Calu3 (cell line): ENCODE measurements at regions of chr2 and their contacts with region 1.

Region 1: GRCh38 chr2:203814661-203815540 is 52.7 kb upstream of the CTLA4 start:
- DNase-seq: peak; percentile 49
- H3K4me3 Mint-ChIP-seq: no peak overlapping the region
- H3K27ac Mint-ChIP-seq: peak overlapping the region; percentile 98
- H3K4me1 Mint-ChIP-seq: peaks cover 73% of the 10 kb centered on the region
- H3K27me3 Mint-ChIP-seq: no peaks in the 10 kb centered on the region
- CTCF ChIP-seq: peak; percentile 68

Region 2: DNA sequence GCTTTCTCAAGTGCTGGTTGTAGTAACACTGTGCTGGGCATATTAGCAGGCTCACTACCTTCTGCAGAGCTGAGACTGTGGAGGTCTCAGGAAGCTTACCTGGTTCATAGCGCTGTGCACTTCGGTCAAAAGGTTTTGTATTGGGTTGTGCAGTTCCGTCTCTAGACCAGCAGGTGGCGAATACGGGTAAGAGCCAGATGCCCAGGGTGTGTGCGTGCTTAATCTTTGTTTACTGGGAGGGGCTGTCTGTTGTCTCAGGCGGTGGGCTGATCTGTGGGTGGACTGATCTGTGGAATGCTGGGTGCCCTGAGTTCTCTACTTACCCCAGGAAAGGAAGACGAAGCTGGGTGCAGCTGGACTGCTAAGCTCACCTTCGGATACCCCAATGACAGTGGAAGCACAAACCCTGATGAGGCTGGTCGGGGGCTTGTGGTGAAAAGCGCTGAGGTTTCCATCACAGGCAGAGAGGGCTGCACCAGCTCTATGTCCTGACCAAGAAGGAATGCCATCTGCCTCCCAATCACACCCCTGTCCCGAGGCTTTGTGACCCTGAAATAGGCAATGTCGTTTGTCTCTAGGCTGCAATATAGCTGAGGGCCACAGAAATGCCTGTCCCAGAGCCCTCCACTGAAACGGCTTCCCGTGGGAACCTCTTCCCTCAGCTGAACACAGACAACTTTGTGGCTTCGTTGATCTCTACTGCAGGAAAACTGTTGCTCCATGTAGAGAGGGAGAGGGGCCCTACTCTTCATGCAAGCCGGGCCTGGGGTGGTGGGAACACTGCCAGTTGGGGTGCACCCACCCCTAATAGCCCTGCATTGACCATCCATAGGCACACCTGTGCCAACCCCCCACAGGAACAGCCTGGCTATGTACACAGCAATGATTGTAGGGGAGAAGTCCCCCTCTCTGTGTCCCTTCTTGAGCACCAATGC is 1226.0 kb before region 1 on chr2:
- CTCF ChIA-PET with region 1: interaction called, 3 read pairs
- intact Hi-C with region 1: loop called (anchors 10 kb)
- DNase-seq: peak; percentile 66
- H3K4me3 Mint-ChIP-seq: no peak overlapping the region
- H3K27ac Mint-ChIP-seq: no peak overlapping the region
- H3K4me1 Mint-ChIP-seq: peaks cover 10% of the 10 kb centered on the region
- H3K27me3 Mint-ChIP-seq: no peaks in the 10 kb centered on the region
- CTCF ChIP-seq: peak; percentile 98

Region 3: GRCh38 chr2:203484266-203485112 is 330.4 kb before region 1 on chr2:
- CTCF ChIA-PET with region 1: interaction called, 3 read pairs
- intact Hi-C with region 1: loop called (anchors 2 kb)
- DNase-seq: peak; percentile 35
- H3K4me3 Mint-ChIP-seq: no peak overlapping the region
- H3K27ac Mint-ChIP-seq: peak overlapping the region; percentile 46
- H3K4me1 Mint-ChIP-seq: peaks cover 19% of the 10 kb centered on the region
- H3K27me3 Mint-ChIP-seq: no peaks in the 10 kb centered on the region
- CTCF ChIP-seq: peak; percentile 41

Region 4: DNA sequence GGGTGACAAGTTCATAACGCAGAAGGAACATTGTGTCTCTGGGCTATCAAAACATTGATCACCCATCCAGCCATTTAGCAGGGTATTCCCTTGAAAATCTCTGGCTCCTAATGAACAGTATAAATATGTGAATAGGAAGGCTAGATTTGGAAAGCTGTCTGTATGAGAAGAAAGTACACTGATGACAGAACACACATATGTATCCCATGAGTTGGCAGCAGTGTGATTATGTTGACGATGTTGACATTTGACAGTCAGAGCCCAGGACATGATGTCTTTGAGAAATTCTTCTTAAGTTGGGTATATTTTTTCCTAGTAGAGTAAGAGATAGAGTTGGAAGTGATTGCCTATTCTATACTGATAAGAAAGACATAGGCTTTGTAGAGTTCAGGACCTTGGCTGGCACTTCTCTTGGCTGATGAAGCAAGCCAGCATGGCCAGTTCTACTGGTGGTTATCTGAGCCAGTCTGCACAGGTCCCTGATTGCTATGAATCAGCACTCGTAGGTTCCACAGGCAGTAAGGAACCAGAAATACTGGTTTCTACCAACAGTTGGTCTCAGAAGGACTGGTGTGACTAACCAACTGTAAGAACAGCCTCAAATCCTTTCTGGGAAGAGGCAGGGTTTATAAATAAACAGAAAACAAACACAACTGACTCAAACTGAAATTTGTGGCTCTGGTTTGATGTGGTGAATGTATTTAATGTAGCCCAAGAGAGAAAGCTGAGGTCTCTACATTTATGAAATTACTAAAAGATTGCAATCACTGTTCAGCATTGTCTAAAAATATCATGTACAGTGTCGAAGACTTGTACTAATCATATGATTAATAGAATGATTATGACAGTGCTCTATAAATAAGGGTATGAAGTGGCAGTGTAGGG is 235.9 kb before region 1 on chr2:
- CTCF ChIA-PET with region 1: interaction called, 3 read pairs
- intact Hi-C with region 1: loop called (anchors 2 kb)
- DNase-seq: peak; percentile 79
- H3K4me3 Mint-ChIP-seq: peak overlapping the region; percentile 57
- H3K27ac Mint-ChIP-seq: peak overlapping the region; percentile 97
- H3K4me1 Mint-ChIP-seq: peaks cover 55% of the 10 kb centered on the region
- H3K27me3 Mint-ChIP-seq: no peaks in the 10 kb centered on the region
- CTCF ChIP-seq: no peak

Region 5: GRCh38 chr2:203656522-203657287 is 158.2 kb before region 1 on chr2:
- CTCF ChIA-PET with region 1: interaction called, 10 read pairs
- intact Hi-C with region 1: loop called (anchors 1 kb)
- DNase-seq: peak; percentile 84
- H3K4me3 Mint-ChIP-seq: no peak overlapping the region
- H3K27ac Mint-ChIP-seq: peak overlapping the region; percentile 83
- H3K4me1 Mint-ChIP-seq: peaks cover 51% of the 10 kb centered on the region
- H3K27me3 Mint-ChIP-seq: no peaks in the 10 kb centered on the region
- CTCF ChIP-seq: no peak

Region 6: GRCh38 chr2:203909261-203909967 is 94.5 kb after region 1 on chr2:
- CTCF ChIA-PET with region 1: interaction called, 11 read pairs
- intact Hi-C with region 1: loop called (anchors 1 kb)
- DNase-seq: peak; percentile 54
- H3K4me3 Mint-ChIP-seq: no peak overlapping the region
- H3K27ac Mint-ChIP-seq: no peak overlapping the region
- H3K4me1 Mint-ChIP-seq: peaks cover 8% of the 10 kb centered on the region
- H3K27me3 Mint-ChIP-seq: no peaks in the 10 kb centered on the region
- CTCF ChIP-seq: peak; percentile 70

Region 7: DNA sequence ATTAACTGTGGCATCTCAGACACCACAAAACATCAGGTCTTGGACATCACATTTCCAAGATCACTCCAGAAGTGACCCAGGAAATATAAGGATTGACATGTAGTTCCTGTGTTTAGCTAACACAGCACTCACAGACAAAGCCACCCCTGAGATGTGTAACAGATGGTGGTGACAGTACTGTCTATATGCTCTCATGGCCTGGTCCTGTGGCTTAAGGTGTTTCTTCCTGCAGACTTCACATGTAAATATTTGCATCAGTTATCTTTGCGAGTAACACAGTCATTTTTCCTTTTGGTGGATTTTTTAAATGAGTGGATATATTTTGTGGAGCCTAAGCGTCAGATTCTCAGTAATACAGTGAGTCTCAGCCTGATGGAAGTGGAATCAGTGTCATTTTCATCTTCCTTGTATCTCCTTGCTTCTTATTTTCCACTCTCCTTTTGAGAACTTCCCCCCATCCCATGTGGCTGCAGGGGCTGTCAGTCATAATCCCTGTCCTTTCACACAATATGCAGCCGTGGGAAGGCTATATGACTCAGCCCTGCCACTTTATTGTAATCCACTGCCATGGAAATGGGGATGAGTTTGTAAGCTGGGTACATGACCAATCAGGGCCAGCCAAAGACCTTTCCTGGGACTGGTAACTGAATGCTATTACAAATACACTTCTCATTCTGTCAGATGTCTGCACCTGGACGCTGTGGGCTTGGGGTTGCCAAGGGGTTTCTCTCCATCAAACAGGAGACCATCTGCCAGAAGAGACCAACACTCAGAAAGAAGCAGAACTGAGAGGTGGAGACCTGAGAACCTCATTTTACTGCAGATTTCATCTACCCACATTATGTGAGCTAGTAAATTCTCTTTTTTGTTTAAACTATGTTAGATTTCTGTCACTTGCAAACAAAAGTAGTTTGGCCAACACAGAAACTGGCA is 196.0 kb after region 1 on chr2:
- CTCF ChIA-PET with region 1: no interaction called
- intact Hi-C with region 1: no loop called
- DNase-seq: no peak
- H3K4me3 Mint-ChIP-seq: no peak overlapping the region
- H3K27ac Mint-ChIP-seq: no peak overlapping the region
- H3K4me1 Mint-ChIP-seq: peaks cover 15% of the 10 kb centered on the region
- H3K27me3 Mint-ChIP-seq: peaks cover 39% of the 10 kb centered on the region
- CTCF ChIP-seq: no peak

Region 8: DNA sequence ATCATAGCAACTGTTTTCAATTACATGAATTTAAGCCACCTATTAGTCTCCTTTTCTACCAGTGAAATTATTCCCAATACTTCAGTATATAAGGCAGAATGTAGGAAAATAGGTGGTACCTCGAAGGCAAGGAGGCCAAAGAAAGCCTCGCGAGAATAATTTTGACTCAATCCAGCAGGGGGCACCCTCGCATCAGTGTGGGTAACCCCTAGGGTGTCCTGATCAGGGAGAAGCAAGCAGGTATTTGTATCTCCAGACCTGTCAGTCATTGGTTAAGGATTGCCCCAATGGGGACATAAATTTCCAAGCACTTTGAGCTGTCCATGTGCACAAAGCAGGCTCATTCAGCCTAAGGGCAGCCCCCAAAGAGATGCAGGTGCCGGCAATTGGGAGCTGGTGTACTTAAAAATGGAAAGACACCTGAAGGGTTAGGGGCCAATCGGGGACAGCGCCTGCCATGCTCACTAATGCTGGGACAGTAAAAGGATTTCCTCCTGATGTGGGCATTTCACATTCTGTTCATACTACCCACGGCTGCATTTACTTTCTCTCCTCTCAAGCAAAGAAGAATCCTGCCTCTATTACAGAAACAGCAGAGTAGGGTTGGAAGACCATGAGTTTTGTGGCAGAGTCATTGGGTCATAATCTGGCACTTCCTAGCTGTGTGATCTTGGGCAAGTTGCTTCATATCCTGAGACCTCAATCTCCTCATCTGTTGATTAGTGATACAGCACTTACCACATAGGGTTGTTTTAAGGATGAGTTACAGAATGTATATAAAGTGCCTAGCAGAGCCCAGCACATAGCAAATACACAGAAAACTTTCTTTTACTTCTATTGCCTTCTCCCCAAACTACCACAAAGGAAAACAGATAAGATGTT is 257.8 kb after region 1 on chr2:
- CTCF ChIA-PET with region 1: no interaction called
- intact Hi-C with region 1: no loop called
- DNase-seq: peak; percentile 59
- H3K4me3 Mint-ChIP-seq: no peak overlapping the region
- H3K27ac Mint-ChIP-seq: no peak overlapping the region
- H3K4me1 Mint-ChIP-seq: no peaks in the 10 kb centered on the region
- H3K27me3 Mint-ChIP-seq: peaks cover 74% of the 10 kb centered on the region
- CTCF ChIP-seq: peak; percentile 64

Region 9: DNA sequence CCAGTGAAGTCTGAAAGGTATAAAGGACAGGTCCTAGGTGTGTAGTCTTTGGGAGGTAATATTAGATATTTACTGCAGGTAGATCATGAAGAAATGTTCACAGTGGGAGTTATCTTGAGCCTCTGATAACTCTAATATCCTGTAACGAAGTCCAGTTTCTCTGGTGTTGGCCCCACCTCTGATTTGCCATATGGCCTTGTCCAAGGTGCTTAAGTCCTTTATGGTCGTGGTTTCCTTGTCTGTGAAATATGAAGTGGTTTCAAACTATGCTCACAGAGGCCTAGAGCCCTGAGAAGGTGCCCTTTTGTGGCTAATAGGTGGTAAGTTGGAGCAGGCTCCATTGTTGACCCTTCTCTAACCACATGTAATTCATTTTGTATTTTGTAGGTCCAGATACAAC is 312.3 kb after region 1 on chr2:
- CTCF ChIA-PET with region 1: no interaction called
- intact Hi-C with region 1: no loop called
- DNase-seq: no peak
- H3K4me3 Mint-ChIP-seq: no peak overlapping the region
- H3K27ac Mint-ChIP-seq: no peak overlapping the region
- H3K4me1 Mint-ChIP-seq: no peaks in the 10 kb centered on the region
- H3K27me3 Mint-ChIP-seq: peaks cover 38% of the 10 kb centered on the region
- CTCF ChIP-seq: no peak